GM10248 (cell line): ENCODE measurements at regions of chr3 and their contacts with region 1.

Region 1: DNA sequence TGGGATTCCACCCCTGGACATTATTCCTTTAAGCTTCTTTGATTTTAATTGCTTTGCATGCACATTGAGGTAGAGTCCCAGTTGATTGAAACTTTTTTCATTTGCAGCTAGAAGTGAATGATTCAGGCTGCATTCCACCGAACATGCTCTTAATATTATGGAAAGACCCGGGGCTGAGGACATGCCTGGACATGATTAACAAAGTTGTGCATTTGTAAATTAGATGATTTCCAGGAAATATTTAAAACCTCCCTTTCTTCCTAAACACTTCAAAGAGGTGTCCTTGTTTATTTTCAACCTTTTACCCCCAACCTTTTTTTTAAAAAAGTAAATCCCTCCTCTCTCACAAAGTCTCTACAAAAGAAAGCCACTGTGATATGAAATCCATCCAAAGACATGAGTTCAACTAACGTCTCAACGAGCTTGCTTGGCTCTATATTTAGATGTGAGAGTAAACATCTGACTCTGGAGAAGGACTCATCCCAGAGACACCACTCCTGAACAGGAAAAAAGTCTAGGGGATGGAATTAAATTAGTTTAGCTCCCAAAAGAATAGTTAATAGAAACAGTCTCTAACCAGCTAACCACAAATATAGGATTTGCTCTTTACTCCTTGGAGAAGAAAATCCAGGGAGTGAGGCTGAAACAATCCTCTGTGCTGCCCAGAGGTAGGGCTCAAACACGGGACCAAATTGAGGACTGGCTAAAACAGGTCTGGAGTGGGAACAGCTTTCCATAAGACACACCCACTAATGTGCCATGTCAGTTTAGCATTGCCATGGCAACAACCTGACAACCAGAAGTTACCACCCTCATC is 83.1 kb downstream of the XXYLT1 start:
- DNase-seq: no peak
- CTCF ChIP-seq: no peak

Region 2: GRCh38 chr3:195172039-195172684 is 15.7 kb before region 1 on chr3:
- CTCF ChIA-PET with region 1: interaction called, 19 read pairs
- POLR2A ChIA-PET with region 1: no interaction called
- DNase-seq: no peak
- CTCF ChIP-seq: no peak

Region 3: DNA sequence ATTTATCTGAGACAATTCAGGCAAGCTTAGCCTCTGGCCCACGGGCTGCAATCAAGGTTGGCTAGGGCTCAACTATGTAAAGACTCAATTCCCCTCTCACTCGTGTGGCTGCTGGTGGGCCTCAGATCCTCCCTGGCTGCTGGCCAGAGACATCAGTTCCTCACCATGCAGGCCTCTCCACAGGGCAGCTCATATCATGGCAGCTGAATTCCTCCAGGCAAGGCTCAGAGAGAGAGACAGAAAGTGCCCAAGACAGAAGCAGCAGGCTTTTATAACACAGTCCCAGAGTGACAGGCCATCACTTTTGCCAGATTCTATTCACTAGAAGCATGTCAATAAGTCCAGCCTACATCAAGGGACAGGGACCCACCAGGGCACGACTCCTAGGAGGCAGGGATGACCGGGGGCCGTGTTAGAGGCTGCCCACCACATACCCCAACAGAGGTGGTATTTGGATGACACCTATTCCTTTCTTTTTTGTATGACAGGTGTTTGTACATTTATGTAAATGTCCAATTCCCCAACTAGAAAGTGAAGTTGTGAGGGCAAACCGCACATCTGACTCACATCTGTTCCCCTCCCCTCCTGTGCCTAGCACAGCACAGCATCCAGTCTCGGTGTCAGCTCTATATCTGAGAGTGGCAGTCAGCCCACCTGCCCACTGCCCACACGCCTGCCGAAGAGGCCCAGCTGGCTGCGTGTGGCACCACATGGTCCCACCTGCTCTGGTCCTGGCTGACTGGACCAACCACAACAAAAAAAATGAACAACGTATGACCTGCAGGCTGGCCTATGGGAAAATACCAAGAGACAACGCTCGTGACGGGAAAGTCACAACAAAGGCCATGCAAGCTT is 20.1 kb after region 1 on chr3:
- CTCF ChIA-PET with region 1: interaction called, 21 read pairs
- POLR2A ChIA-PET with region 1: no interaction called
- DNase-seq: peak; percentile 68
- CTCF ChIP-seq: no peak